ENCODE measurements at regions of chr15 and their contacts with region 1.

Region 1: GRCh38 chr15:78750566-78750965 is 60.7 kb downstream of the ADAMTS7 start:
- DNase-seq: peak in 1 of 2 donors; percentile 80
- ATAC-seq: peak; percentile 77 to 92 (median 84)
- H3K4me3 ChIP-seq: peak overlapping the region; percentile 54
- H3K27ac ChIP-seq: peak overlapping the region; percentile 82
- H3K4me1 ChIP-seq: peaks cover 18% of the 10 kb centered on the region
- H3K27me3 ChIP-seq: no peaks in the 10 kb centered on the region
- CTCF ChIP-seq: no peak

Region 2: GRCh38 chr15:77944002-77944867 is 806.3 kb before region 1 on chr15:
- intact Hi-C with region 1: loop called in 1 of 2 experiments (anchors 2 kb)
- DNase-seq: peak; percentile 89 to 93
- ATAC-seq: peak; percentile 89 to 98 (median 93)
- H3K4me3 ChIP-seq: peak overlapping the region; percentile 73
- H3K27ac ChIP-seq: peak overlapping the region; percentile 80
- H3K4me1 ChIP-seq: no peaks in the 10 kb centered on the region
- H3K27me3 ChIP-seq: no peaks in the 10 kb centered on the region
- CTCF ChIP-seq: no peak

Region 3: DNA sequence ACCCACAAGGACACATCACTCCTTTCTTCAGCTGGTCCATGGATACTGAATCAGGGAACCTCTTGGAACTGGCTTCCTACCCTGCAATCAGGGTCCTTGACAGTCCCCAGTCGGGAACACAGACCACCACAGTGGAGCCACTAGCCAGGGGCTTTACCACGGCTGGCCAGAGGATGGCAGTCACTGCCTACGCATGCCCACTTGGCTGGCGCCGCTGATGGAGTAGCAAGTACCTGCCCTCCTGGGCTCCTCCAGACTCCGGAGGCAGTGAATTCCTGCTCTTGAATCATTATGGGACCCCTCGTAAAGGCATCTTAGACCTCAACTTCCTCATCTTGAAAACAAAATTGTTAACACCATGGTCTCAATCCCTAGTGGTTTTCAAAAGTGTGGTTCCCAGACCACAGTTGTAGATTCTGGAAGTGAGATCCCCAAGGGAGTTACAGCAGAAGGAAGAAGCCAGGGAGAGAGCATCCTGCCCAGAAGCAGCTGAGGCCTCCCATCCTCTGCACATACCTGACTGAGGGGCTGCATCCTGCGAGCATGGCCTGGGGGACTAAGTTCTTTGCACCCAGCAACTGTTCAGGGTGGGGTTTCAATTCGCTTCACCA is 442.0 kb before region 1 on chr15:
- intact Hi-C with region 1: loop called in 1 of 2 experiments (anchors 10 kb)
- DNase-seq: peak; percentile 56 to 79
- ATAC-seq: peak; percentile 81 to 96 (median 86)
- H3K4me3 ChIP-seq: no peak overlapping the region
- H3K27ac ChIP-seq: no peak overlapping the region
- H3K4me1 ChIP-seq: no peaks in the 10 kb centered on the region
- H3K27me3 ChIP-seq: peaks cover 0 to 6% (median 2%) of the 10 kb centered on the region in 3 donors
- CTCF ChIP-seq: peak; percentile 84

Region 4: DNA sequence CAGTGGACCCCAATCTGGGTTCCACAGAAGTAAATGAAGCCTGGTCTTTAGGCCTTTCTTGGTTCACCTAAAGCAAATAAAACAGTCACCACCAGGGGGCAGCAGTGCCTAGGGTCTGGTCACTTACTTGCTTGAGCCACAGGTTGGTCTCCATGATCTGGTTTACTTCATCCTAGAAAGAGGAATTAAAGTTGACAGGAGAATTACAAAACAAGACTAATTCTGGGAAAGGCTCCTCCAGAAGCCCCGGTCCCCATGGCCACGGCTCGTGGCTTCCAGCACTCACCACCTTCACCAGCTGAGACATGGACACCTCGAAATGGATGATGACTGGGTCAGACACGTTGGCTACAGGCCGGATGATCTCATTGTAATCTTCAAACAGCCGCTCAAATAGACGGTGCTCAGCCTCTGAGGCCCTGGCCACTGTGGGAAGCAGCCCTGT is 132.1 kb before region 1 on chr15:
- intact Hi-C with region 1: loop called (anchors 2 to 5 kb)
- DNase-seq: peak; percentile 79 to 85
- ATAC-seq: peak; percentile 74 to 88 (median 78)
- H3K4me3 ChIP-seq: no peak overlapping the region
- H3K27ac ChIP-seq: no peak overlapping the region
- H3K4me1 ChIP-seq: peaks cover 7% of the 10 kb centered on the region
- H3K27me3 ChIP-seq: peaks cover 0 to 36% (median 17%) of the 10 kb centered on the region in 3 donors
- CTCF ChIP-seq: peak; percentile 92

Region 5: DNA sequence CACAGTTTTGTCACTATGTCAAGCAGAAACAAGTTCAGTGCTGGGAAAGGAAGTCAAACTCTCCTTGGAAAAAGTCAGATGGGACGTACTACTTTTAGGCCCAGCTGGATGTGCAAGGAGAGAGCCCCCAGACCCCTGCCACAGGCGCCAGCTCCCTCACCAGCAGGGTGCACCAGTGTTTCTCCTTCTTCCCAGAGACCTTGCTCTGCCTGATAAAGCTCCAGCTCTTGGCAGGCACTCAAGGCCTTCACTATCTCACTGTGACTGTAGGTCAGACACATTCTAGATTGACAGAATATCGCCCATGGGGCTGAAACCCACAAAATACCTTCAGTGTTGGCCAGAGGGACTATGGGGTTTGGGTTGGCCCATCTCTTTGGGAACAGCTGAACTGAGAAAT is 54.7 kb before region 1 on chr15:
- intact Hi-C with region 1: no loop called
- DNase-seq: no peak
- ATAC-seq: no peak
- H3K4me3 ChIP-seq: no peak overlapping the region
- H3K27ac ChIP-seq: no peak overlapping the region
- H3K4me1 ChIP-seq: no peaks in the 10 kb centered on the region
- H3K27me3 ChIP-seq: no peaks in the 10 kb centered on the region
- CTCF ChIP-seq: no peak

Region 6: DNA sequence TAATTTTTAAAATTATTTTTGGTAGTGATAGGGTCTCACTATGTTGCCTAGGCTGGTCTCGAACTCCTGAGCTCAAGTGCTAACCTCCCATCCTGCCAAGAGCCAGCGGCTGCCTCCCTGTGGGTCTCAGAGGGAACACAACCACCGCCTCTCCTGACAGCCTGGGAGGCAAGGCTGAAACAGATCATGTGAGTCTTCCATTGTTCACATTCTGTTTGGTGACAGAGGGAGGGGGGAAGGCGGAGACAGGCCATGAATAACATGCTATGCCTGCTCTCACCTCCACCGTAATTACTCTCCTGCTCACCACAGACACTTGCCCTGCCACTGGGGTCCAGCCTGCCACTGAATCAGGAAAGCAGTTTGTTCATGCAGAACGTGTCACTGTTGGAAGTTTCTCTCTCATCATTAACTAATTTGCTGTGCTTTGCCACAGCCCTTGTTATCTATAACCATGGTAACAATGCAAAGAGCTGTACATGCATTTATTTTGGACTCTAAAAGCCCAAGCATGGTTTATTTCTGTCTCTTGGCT is 418.4 kb after region 1 on chr15:
- intact Hi-C with region 1: no loop called
- DNase-seq: no peak
- ATAC-seq: peak in 2 of 4 donors; percentile 59 to 60
- H3K4me3 ChIP-seq: no peak overlapping the region
- H3K27ac ChIP-seq: no peak overlapping the region
- H3K4me1 ChIP-seq: peaks cover 9% of the 10 kb centered on the region
- H3K27me3 ChIP-seq: no peaks in the 10 kb centered on the region
- CTCF ChIP-seq: no peak